AG04450 (cell line): ENCODE measurements at regions of chr14 and their contacts with region 1.

Region 1: GRCh38 chr14:61269321-61270083 is 11.6 kb downstream of the TMEM30B start:
- DNase-seq: no peak
- H3K4me3 ChIP-seq: peak overlapping the region; percentile 62
- H3K27ac ChIP-seq: no peak overlapping the region
- H3K27me3 ChIP-seq: no peaks in the 10 kb centered on the region
- CTCF ChIP-seq: peak; percentile 76

Region 2: DNA sequence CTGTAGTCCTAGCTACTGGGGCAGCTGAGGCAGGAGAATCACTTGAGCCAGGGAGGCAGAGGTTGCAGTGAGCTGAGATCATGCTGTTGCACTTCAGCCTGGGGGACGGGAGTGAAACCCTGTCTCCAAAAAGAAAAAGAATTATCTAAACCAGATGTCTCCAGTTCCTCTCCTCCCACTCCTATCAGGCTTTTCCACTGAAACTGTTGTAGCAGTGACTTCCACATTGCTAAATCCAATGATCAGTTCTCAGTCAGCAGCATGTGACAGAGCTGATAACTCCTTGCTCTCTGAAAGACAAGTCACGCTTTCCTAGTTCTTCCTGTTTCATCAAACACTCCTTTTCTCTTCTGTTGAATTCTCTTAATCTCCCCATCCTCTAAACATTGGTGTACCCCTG is 279.9 kb before region 1 on chr14:
- CTCF ChIA-PET with region 1: interaction called, 10 read pairs
- POLR2A ChIA-PET with region 1: no interaction called
- DNase-seq: no peak
- H3K4me3 ChIP-seq: no peak overlapping the region
- H3K27ac ChIP-seq: no peak overlapping the region
- H3K27me3 ChIP-seq: no peaks in the 10 kb centered on the region
- CTCF ChIP-seq: no peak

Region 3: DNA sequence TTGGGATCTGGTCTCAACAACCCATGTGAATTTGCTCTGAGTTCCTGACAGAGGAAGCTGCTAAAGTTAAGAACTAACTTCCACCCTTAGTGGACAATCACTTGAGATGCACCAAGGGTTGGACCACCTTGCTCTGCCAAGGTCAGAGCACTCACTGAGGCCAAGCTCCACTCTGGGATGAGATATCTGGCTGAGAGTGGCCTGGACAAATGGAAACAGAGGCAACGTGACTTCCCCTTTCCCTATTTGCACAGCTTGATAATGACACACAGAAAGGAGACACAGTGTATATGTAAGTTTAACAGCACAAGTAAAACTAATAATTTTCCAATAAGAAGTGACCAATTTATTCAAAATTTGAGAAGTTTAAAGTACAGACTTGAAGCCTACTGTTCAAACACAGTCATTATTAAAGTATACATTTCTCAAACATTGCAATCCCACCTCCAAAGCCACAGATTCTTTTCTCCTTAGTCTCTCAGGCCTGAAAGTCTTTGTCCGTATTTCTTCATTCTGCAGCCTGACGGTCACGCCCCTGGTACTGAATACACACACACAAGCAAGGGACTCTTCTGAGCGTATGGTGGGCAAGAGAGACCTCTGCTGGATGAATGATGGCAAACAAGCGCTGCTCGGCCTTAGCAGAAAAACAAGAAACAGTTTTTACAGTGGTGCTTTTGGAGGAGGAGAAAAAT is 17.0 kb before region 1 on chr14:
- CTCF ChIA-PET with region 1: interaction called, 18 read pairs
- POLR2A ChIA-PET with region 1: no interaction called
- DNase-seq: peak; percentile 98
- H3K4me3 ChIP-seq: no peak overlapping the region
- H3K27ac ChIP-seq: peak overlapping the region; percentile 94
- H3K27me3 ChIP-seq: no peaks in the 10 kb centered on the region
- CTCF ChIP-seq: peak; percentile 96

Region 4: GRCh38 chr14:61322441-61323290 is 53.2 kb after region 1 on chr14:
- CTCF ChIA-PET with region 1: no interaction called
- POLR2A ChIA-PET with region 1: no interaction called
- DNase-seq: no peak
- H3K4me3 ChIP-seq: no peak overlapping the region
- H3K27ac ChIP-seq: no peak overlapping the region
- H3K27me3 ChIP-seq: peaks cover 36% of the 10 kb centered on the region
- CTCF ChIP-seq: no peak